Activated T-helper 1 cell treated with anti-CD3 and anti-CD28 coated beads, Interleukin-12 subunit alpha, Interleukin-12 subunit beta, Interleukin-2, Interleukin-4 antibody, amounts not matched to agents 30 ng/mL and 10 ng/mL and 1 ng/mL, durations not matched to agents 14 hours and 24 hours and 36 hours (primary cell): ENCODE measurements at regions of chrX and their contacts with region 1.

Region 1: DNA sequence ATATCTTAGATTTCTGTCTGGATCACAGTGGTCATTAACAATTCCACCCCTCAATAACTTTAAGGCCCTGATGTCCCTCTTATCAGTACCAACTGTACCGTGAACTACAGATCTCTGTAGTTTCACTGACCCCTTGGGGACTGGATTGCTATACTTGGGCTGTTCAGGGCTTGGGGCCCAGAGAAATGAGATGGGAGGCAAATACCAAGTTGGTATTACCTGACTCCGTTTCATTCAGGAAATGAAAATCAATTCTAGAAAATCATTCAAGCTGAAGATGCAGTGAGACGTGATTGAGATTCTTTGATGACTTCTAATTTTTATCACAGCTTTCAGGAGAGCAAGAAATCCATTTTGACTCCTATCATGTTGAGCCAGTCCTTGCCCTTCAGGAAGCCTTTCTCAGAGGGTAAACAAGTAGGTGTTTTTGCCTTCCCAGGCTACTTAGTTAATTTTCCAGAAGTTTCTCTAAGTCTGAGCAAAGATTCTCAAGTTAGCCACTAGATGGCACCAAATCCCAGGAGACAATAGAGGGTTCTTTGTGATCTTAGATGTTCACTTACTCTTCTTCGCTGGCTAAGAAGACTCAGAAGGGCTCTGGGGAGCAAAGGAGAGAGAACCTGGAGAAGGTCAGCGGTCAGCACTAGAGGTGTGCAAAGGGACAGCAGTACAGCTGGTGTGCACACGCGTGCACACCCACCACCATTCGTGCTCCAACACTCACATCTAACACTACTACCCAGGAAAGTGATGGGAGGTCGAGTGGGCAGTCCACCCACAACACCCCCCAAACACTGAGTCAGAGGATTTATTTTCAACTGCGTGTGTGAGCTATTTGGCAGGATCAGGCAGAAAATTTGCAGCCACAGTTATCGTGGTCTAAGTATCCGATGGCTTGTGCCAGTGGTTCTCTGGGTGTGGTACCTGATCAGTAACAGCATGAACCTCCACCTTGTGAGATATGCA is 7.4 kb downstream of the HNRNPH2 start:
- DNase-seq: peak; percentile 17
- H3K4me3 Mint-ChIP-seq: peak overlapping the region; percentile 42
- H3K27ac Mint-ChIP-seq: peak overlapping the region; percentile 70
- H3K4me1 Mint-ChIP-seq: peaks cover 49% of the 10 kb centered on the region
- H3K27me3 Mint-ChIP-seq: no peaks in the 10 kb centered on the region

Region 2: DNA sequence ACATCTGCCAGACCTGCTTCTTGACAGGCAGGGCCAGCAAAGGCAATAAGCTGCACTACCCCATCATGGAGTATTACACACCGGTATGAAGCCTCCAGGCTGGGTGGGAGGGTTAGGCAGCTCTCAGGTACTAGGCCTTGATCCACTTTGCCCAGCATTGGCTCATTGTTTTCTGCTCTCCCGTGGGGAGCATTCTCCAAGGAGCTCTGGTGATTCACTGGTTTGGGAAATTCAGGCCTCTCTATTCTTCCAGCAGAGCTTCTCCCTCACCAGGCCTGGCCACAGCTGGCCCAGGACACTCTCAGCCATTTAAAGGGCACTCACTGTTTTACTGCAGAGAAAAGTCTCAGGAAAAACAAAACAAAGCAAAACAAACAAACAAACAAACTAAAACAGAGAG is 162.8 kb before region 1 on chrX:
- intact Hi-C with region 1: no loop called
- DNase-seq: no peak
- H3K4me3 Mint-ChIP-seq: no peak overlapping the region
- H3K27ac Mint-ChIP-seq: no peak overlapping the region
- H3K4me1 Mint-ChIP-seq: peaks cover 3% of the 10 kb centered on the region
- H3K27me3 Mint-ChIP-seq: no peaks in the 10 kb centered on the region

Region 3: GRCh38 chrX:101287402-101287801 is 128.1 kb before region 1 on chrX:
- intact Hi-C with region 1: no loop called
- DNase-seq: no peak
- H3K4me3 Mint-ChIP-seq: no peak overlapping the region
- H3K27ac Mint-ChIP-seq: no peak overlapping the region
- H3K4me1 Mint-ChIP-seq: no peaks in the 10 kb centered on the region
- H3K27me3 Mint-ChIP-seq: peaks cover 10% of the 10 kb centered on the region

Region 4: GRCh38 chrX:101430457-101431078 is 15.1 kb after region 1 on chrX:
- intact Hi-C with region 1: loop called (anchors 1 kb)
- DNase-seq: no peak
- H3K4me3 Mint-ChIP-seq: peak overlapping the region; percentile 56
- H3K27ac Mint-ChIP-seq: peak overlapping the region; percentile 76
- H3K4me1 Mint-ChIP-seq: peaks cover 13% of the 10 kb centered on the region
- H3K27me3 Mint-ChIP-seq: no peaks in the 10 kb centered on the region

Region 5: DNA sequence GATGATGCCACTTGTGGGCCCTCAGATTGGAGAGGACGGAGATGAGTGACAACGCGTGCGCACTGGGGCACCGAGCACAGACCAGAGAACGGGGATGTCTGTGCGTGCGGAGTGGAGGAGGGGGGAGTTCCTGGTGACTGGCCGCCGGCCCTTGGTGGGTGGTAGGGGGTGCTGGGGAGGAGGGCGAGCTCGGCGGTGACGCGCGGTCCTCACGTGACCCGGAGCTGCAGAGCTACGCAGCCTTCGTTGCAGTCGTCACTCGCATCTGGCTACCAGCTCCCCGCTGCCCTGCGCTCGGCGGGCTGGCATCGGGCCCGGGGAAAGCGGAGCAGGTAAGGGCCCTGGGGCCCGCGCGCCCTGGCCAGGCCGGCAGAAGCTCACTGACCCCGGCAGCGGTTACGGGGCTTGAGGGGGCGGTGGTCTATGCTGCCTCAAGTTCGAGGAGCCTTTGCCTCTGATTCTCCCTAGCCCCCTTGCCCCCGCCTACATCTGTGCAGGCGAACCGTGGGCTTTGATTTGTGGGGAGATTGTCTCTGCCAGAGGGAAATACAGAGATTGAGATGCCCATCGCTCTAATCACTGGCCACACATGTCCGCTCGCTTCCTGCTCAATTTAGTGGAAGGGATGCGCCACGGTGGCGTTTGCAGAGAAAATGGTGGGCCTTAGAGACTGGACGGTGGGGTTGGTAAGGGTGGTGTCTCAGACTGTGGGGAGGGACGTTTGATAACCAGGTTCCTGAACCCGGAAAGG is 69.9 kb after region 1 on chrX and contains the start of gene ARMCX4:
- intact Hi-C with region 1: loop called (anchors 10 kb)
- DNase-seq: no peak
- H3K4me3 Mint-ChIP-seq: peak within 1 kb of the TSS; percentile 80
- H3K27ac Mint-ChIP-seq: no peak within 1 kb of the TSS
- H3K4me1 Mint-ChIP-seq: peaks cover 9% of the 10 kb centered on the region
- H3K27me3 Mint-ChIP-seq: peaks cover 4% of the 10 kb centered on the region
- total RNA-seq, gene ARMCX4: 3.3 and 4.8 TPM in 2 replicates

Region 6: DNA sequence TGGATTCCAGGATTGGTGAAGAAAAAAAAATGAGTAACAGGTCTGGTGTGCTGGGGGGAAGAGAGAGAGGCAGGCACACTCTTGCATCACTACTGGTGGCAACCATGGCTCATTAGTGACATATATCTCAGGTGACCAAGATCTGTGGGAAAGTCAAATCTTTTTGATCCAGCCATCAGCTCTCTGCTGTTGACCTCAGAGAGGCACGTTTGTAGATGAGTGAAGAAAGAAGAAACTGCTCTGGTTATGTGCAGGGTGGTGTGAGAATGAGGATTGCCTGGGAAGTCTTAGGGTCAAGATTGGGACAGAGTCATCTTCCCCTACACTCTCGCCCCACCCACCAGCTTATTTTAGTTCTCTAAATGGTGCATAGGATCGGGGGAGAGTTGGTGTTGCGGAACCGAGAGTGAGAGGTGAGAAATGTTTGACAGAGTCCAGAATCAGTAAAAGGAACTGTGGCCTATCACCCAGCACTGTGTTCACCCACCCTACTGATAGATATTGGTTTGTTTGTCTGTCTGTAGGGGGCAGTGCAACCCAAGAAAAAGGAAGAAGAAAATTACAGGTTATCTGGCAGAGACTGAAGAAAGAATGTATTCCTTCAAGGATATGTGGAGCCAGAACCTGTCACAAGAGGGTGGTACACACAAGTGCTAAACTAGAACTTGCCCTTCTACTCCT is 180.4 kb after region 1 on chrX:
- intact Hi-C with region 1: loop called (anchors 5 kb)
- DNase-seq: peak; percentile 8
- H3K4me3 Mint-ChIP-seq: no peak overlapping the region
- H3K27ac Mint-ChIP-seq: no peak overlapping the region
- H3K4me1 Mint-ChIP-seq: no peaks in the 10 kb centered on the region
- H3K27me3 Mint-ChIP-seq: peaks cover 2% of the 10 kb centered on the region

Region 7: GRCh38 chrX:101759000-101759399 is 343.5 kb after region 1 on chrX:
- intact Hi-C with region 1: loop called (anchors 2 kb)
- DNase-seq: peak; percentile 1
- H3K4me3 Mint-ChIP-seq: no peak overlapping the region
- H3K27ac Mint-ChIP-seq: no peak overlapping the region
- H3K4me1 Mint-ChIP-seq: no peaks in the 10 kb centered on the region
- H3K27me3 Mint-ChIP-seq: peaks cover 7% of the 10 kb centered on the region

Region 8: GRCh38 chrX:101799387-101799786 is 383.9 kb after region 1 on chrX:
- intact Hi-C with region 1: loop called (anchors 1 kb)
- DNase-seq: peak; percentile 72
- H3K4me3 Mint-ChIP-seq: peak overlapping the region; percentile 70
- H3K27ac Mint-ChIP-seq: no peak overlapping the region
- H3K4me1 Mint-ChIP-seq: peaks cover 4% of the 10 kb centered on the region
- H3K27me3 Mint-ChIP-seq: peaks cover 4% of the 10 kb centered on the region

Region 9: GRCh38 chrX:101931488-101932248 is 516.2 kb after region 1 on chrX and contains the start of gene ZMAT1:
- intact Hi-C with region 1: loop called (anchors 5 kb)
- DNase-seq: peak; percentile 76
- H3K4me3 Mint-ChIP-seq: peak within 1 kb of the TSS; percentile 76
- H3K27ac Mint-ChIP-seq: peak within 1 kb of the TSS; percentile 83
- H3K4me1 Mint-ChIP-seq: peaks cover 13% of the 10 kb centered on the region
- H3K27me3 Mint-ChIP-seq: peaks cover 1% of the 10 kb centered on the region
- total RNA-seq, gene ZMAT1: 0.62 and 0.83 TPM in 2 replicates